Astrocyte of the cerebellum (primary cell): ENCODE measurements at regions of chr4 and their contacts with region 1.

Region 1: DNA sequence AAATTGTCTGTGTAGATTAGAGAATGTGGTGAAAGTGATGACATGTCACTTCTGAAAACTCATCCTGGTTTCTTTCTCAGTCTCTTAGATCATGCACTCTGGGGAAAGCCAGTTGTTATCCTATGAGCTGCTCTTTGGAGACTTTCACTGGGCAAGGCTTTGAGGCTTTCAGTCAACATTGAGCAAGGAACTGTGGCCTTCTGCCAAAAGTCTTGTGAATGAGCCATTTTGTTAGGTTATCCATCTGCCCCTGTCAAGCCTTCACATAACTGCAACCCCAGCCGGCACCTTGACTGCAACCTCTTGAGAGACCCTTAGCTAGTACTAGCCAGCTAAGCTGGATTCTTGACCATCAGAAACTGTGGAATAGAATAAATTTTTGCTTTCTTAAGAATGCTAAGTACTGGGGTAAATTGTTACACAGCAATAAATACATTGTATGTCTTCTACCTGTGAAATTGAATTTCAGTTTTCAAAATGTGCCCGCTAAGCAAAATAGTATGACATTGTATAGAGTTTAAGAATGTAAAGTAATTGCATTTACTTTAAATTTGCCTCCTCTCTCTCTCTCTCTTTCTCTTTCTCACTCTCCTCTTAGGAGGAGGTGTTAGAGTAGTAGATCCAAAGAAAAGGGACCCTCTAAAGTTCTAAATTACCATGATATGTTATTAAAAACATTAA is 1273.0 kb downstream of the RAPGEF2 start:
- DNase-seq: no peak
- H3K4me3 ChIP-seq: no peak overlapping the region
- CTCF ChIP-seq: no peak

Region 2: GRCh38 chr4:160326110-160326509 is 49.8 kb before region 1 on chr4:
- in situ Hi-C with region 1: loop called (anchors 5 kb)
- DNase-seq: no peak
- H3K4me3 ChIP-seq: no peak overlapping the region
- CTCF ChIP-seq: no peak